H1 (cell line): ENCODE measurements at regions of chr10 and their contacts with region 1.

Region 1: GRCh38 chr10:73625884-73626752 is 15.2 kb downstream of the MYOZ1 start:
- DNase-seq: peak; percentile 86 to 91
- H3K4me3 ChIP-seq: peak overlapping the region; percentile 83 to 99 (median 98)
- H3K27ac ChIP-seq: peak overlapping the region; percentile 95
- H3K4me1 ChIP-seq: no peaks in the 10 kb centered on the region; a peak in 1 of 7 replicates
- H3K27me3 ChIP-seq: no peaks in the 10 kb centered on the region
- CTCF ChIP-seq: no peak
- EP300 ChIP-seq: no peak
- POLR2A ChIP-seq: peak in 1 of 2 experiments; percentile 56; a peak in 2 of 3 replicates
- RAD21 ChIP-seq: no peak

Region 2: GRCh38 chr10:72918352-72918751 is 707.8 kb before region 1 on chr10:
- CTCF ChIA-PET with region 1: no interaction called
- POLR2A ChIA-PET with region 1: no interaction called
- DNase-seq: no peak
- H3K4me3 ChIP-seq: no peak overlapping the region
- H3K27ac ChIP-seq: no peak overlapping the region
- H3K4me1 ChIP-seq: peaks cover 0 to under 1% (median 0%) of the 10 kb centered on the region in 4 experiments; a peak in 1 of 7 replicates
- H3K27me3 ChIP-seq: no peaks in the 10 kb centered on the region
- CTCF ChIP-seq: peak in 1 of 3 experiments; percentile 8; a peak in 1 of 4 replicates
- EP300 ChIP-seq: no peak
- POLR2A ChIP-seq: no peak
- RAD21 ChIP-seq: peak; percentile 44 to 58

Region 3: GRCh38 chr10:73591935-73592699 is 34.0 kb before region 1 on chr10:
- CTCF ChIA-PET with region 1: interaction called, 3 read pairs
- POLR2A ChIA-PET with region 1: interaction called, 26 read pairs
- DNase-seq: peak in 1 of 2 experiments; percentile 66
- H3K4me3 ChIP-seq: peak overlapping the region in 3 of 4 experiments; percentile 20 to 52 (median 34); a peak in 5 of 8 replicates
- H3K27ac ChIP-seq: peak overlapping the region; percentile 82; the same call in 1 of the 2 replicates
- H3K4me1 ChIP-seq: peaks cover 0 to 22% (median 4%) of the 10 kb centered on the region in 4 experiments; a peak in 2 of 7 replicates
- H3K27me3 ChIP-seq: no peaks in the 10 kb centered on the region
- CTCF ChIP-seq: no peak
- EP300 ChIP-seq: no peak
- POLR2A ChIP-seq: peak; percentile 27 to 73
- RAD21 ChIP-seq: no peak

Region 4: GRCh38 chr10:73609116-73609515 is 17.0 kb before region 1 on chr10:
- CTCF ChIA-PET with region 1: interaction called, 4 read pairs
- POLR2A ChIA-PET with region 1: interaction called, 11 read pairs
- DNase-seq: no peak
- H3K4me3 ChIP-seq: no peak overlapping the region
- H3K27ac ChIP-seq: no peak overlapping the region
- H3K4me1 ChIP-seq: no peaks in the 10 kb centered on the region
- H3K27me3 ChIP-seq: no peaks in the 10 kb centered on the region
- CTCF ChIP-seq: no peak
- EP300 ChIP-seq: no peak
- POLR2A ChIP-seq: no peak
- RAD21 ChIP-seq: no peak

Region 5: DNA sequence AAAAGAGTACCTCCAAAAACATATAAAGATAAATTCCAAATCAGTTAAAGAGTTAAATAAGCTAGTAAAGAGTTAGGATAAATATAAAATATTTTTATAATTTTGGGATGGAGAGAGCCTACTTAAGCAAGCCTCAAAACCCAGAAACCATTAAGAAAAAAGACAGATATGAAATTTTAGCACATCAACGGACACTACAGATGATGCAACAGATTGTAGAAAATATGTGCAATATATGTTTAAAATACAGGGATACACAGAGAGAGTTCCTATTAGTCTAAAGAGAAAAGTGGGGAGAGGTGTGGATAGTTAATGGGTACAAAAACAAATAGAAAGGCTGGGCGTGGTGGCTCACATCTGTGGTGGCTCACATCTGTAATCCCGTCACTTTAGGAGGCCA is 11.4 kb before region 1 on chr10:
- CTCF ChIA-PET with region 1: interaction called, 6 read pairs
- POLR2A ChIA-PET with region 1: interaction called, 11 read pairs
- DNase-seq: no peak
- H3K4me3 ChIP-seq: no peak overlapping the region
- H3K27ac ChIP-seq: no peak overlapping the region
- H3K4me1 ChIP-seq: no peaks in the 10 kb centered on the region
- H3K27me3 ChIP-seq: no peaks in the 10 kb centered on the region
- CTCF ChIP-seq: no peak
- EP300 ChIP-seq: no peak
- POLR2A ChIP-seq: no peak
- RAD21 ChIP-seq: no peak

Region 6: DNA sequence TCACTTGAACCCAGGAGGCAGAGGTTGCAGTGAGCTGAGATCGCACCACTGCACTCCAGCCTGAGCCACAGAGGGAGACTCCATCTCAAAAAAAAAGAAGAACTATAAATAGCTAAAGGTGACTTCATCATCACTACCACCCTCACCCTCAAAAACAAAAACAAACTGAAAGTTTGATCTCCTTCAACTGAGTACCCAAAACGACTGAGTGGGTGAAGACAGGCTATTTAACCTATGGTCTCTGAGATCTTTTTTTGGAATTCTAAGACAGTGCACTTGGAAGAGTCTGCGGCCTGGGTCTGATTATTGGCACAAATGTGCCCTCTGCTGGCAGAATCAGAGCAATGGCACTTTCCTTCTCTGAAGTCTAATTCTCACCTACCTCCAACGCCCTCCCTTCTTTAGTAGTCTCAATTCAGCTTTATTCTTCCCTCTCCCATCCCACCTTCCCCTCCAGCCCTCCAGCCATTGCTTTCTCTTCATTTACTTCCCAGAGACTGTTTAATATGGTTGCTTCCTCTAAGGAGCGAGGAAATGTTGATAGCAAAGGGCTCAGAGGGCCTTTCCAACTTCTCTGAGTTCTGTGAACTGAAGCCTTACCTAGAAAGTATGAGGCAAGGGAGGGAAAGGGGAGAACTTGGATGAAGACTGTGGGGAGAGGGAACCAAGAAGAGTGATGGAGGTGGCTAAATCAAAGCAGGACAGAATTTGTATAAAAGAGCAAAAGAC is 18.1 kb after region 1 on chr10:
- CTCF ChIA-PET with region 1: interaction called, 29 read pairs
- POLR2A ChIA-PET with region 1: interaction called, 9 read pairs
- DNase-seq: peak in 1 of 2 experiments; percentile 63
- H3K4me3 ChIP-seq: no peak overlapping the region
- H3K27ac ChIP-seq: no peak overlapping the region
- H3K4me1 ChIP-seq: peaks cover 0 to 15% (median 9%) of the 10 kb centered on the region in 4 experiments; a peak in 6 of 7 replicates
- H3K27me3 ChIP-seq: no peaks in the 10 kb centered on the region
- CTCF ChIP-seq: peak; percentile 43 to 84 (median 83)
- EP300 ChIP-seq: no peak
- POLR2A ChIP-seq: no peak
- RAD21 ChIP-seq: peak; percentile 96 to 97